ENCODE measurements at regions of chr9 and their contacts with region 1.

Region 1: GRCh38 chr9:128383007-128383753 is 12.0 kb downstream of the URM1 start:
- DNase-seq: no peak
- ATAC-seq: no peak
- H3K4me3 ChIP-seq: no peak overlapping the region
- H3K27ac ChIP-seq: no peak overlapping the region
- H3K4me1 ChIP-seq: peaks cover 0 to 8% (median 0%) of the 10 kb centered on the region in 9 donors
- H3K27me3 ChIP-seq: no peaks in the 10 kb centered on the region
- CTCF ChIP-seq: no peak

Region 2: DNA sequence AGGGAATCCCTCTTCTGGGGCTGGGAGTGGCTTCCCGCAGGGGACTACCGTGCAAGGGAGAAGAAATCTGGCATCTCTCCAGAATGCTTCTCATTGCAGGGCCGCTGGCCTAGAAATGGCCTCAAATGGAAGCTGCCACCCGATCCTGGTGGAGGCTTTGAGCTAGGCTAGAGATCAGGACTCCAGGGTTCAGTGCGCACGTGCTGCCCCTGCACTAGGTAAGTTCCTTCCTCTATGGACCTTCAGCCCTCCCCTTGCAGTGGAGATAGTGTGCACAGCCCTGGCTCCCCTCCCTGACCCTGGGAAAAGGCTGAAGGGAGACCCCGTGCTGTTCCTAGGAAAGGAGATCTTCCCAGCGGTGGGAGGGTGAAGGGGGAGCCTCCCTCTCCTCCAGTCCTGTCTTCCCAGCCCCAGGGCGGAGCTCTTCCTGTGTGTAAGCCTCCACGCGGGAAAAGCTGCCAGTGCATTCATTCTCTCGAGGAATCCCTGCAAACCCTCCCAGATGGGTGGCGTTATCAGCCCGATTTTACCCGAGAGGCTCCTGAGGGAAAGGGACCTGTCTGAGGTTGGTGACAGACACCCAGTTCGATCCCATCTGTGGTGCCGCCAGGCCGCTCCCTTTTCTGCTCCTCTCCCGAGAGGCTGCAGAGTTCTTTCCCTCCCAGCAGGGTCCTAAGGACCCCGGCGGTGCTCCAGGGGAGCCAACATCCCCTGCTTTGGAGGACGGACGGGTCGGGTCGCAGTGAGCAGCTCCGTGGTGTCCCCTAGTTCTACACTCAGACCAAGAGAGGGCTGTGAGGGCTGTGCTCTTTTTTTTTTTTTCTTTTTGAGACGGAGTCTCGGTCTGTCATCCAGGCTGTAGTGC is 36.1 kb after region 1 on chr9:
- intact Hi-C with region 1: loop called in 1 of 10 experiments (anchors 2 kb)
- DNase-seq: no peak
- ATAC-seq: peak in 1 of 8 donors; percentile 12
- H3K4me3 ChIP-seq: peak overlapping the region in 9 of 10 donors; percentile 89 to 99 (median 95)
- H3K27ac ChIP-seq: peak overlapping the region in 3 of 10 donors; percentile 68 to 83 (median 80)
- H3K4me1 ChIP-seq: peaks cover 11 to 28% (median 22%) of the 10 kb centered on the region in 9 donors
- H3K27me3 ChIP-seq: peaks cover 0 to 58% (median 44%) of the 10 kb centered on the region in 7 donors
- CTCF ChIP-seq: no peak